Tibial artery (tissue), 4 donors: ENCODE measurements at regions of chr3 and their contacts with region 1.

Region 1: GRCh38 chr3:83649692-83650091 is 1309.1 kb upstream of the CADM2 start:
- DNase-seq: peak in 1 of 2 donors; percentile 41
- H3K4me3 ChIP-seq: no peak overlapping the region
- H3K27ac ChIP-seq: no peak overlapping the region
- H3K4me1 ChIP-seq: no peaks in the 10 kb centered on the region
- H3K27me3 ChIP-seq: no peaks in the 10 kb centered on the region
- CTCF ChIP-seq: no peak

Region 2: GRCh38 chr3:83895892-83896291 is 246.2 kb after region 1 on chr3:
- intact Hi-C with region 1: loop called (anchors 5 kb)
- DNase-seq: no peak
- H3K4me3 ChIP-seq: no peak overlapping the region
- H3K27ac ChIP-seq: no peak overlapping the region
- H3K4me1 ChIP-seq: no peaks in the 10 kb centered on the region
- H3K27me3 ChIP-seq: no peaks in the 10 kb centered on the region
- CTCF ChIP-seq: no peak